Posterior cingulate gyrus (tissue), 11 donors: ENCODE measurements at regions of chr1 and their contacts with region 1.

Region 1: DNA sequence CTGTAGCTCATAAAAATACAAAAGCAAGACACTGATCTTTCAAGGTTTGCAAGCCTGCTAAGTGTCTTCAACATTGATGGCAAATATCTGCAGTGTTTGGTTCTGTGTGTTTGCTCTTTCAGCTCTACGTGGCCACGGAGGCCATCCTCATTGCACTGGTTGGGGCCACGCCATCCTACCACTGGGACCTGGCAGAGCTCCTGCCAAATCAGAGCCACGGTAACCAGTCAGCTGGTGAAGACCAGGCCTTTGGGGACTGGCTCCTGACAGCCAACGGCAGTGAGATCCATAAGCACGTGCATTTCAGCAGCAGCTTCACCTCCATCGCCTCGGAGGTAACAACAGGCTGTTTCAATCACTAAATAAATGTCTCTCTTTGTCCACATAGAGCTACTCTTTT is 15.6 kb downstream of the SLC22A15 start:
- DNase-seq: peak in 1 of 10 donors; percentile 67

Region 2: DNA sequence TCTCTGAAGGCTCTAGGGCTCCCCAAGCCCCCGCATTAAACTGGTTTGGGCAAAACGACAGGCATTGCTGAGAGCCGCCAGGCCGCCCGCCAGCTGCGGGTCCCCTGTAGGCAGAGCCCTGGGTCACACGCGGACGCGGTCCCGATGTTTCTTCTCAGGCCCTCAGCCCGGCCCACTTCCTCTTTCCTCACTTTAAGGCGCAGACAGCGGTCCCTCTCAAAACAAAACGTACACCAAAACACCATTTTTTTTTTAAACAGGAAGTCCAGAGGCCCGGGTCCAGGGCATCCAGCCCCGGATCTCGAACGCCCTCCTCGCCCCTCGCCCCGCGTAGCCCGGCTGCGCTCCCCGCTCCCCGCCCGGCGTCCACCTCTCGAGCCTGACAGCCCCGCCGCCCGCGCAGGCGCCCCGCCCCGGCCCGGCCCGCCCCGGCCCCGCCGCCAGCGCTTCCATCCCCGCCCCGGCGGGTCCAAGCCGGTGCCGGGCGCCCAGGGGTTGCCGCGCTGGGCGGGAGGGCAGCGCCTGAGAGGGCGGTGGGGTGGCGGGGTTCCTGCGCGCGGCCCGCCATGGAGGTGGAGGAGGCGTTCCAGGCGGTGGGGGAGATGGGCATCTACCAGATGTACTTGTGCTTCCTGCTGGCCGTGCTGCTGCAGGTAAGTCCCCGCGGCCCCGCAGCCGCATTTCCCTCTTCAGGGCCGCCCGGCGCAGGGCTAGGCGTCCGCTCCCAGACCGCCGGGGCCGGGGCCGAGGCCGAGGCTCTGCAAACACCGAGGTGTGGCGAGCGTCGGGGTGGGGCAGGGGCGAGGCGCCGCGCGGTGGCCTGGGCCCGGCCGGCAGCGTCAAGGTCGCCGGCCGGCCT is 15.6 kb before region 1 on chr1 and contains the start of gene SLC22A15:
- intact Hi-C with region 1: no loop called
- DNase-seq: peak; percentile 36 to 94 (median 56)

Region 3: GRCh38 chr1:116024626-116025025 is 32.7 kb after region 1 on chr1:
- intact Hi-C with region 1: loop called (anchors 5 kb)
- DNase-seq: no peak

Region 4: DNA sequence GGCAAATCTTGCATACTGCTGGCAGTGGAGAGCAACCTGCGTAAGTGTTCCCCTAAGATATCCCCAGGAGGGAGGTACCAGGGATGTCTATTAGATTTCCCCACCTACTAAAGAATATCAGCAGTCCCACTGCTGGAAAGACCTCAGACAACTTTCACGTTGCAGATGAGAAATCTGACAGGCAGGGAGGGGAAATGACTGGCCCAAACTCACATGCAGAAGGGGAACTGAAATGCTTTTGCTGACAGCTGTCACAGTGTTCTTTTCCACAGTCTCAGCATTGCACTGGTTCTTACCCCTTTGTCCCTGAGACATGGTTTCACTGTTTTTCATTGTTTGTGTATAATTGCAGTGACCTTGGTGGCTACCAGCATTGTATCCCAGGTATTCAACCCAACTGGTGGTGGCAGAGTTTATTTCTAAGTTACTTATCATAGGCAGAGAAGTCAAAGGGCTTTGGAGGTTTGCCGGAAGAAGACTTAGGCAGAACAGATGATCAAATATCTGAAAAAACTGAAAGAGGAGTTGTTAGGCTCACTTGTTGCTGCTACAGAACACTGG is 296.4 kb after region 1 on chr1:
- intact Hi-C with region 1: no loop called
- DNase-seq: no peak